ENCODE measurements at regions of chr20 and their contacts with region 1.

Region 1: DNA sequence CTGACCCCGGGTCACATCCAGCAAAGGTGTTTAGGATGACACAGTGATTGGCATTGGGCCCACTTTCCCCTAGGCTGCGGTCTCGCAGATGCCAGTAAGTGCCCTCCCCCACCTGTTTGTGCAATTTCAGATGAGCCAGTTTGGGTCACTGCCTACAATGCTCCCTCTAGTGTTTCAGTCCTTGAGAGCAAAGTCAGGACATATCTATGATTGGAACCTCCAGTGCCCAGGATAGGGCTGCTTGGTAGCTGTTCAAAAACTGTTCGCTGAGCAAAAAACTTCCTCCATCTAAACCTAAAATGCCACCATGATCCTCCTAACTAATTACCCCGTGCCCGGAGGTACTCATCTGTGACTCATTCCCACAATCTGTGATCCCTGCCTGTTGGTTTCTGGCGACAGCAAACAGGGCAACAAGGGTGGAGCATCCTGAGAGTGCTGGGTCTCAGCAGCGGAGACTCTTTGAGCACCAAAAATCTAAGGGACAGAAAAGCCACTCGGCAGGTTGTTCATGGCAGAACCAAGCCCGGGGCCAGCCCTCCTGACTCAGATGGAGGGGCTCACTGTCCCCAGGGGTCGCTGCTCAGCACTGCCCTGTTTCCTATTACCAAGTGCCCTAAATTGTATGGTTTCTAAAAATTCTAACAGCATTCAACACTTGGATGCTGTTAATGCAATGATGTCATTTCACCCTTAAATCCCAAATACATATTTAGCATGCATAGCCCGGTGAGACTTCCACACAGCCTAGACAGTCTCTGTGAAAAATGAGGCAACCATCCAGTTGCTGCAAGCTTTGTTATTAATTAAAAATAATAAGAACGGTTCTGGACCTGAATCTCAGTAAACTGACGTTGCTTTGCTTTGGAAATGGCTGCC is 5.0 kb downstream of the VSX1 start:
- DNase-seq: peak in 1 of 2 donors; percentile 57
- ATAC-seq: peak; percentile 75 to 84 (median 82)
- H3K4me3 ChIP-seq: peak overlapping the region; percentile 47
- H3K27ac ChIP-seq: peak overlapping the region; percentile 32
- H3K4me1 ChIP-seq: peaks cover 15% of the 10 kb centered on the region
- H3K27me3 ChIP-seq: peaks cover 0 to 30% (median 12%) of the 10 kb centered on the region in 3 donors
- CTCF ChIP-seq: peak; percentile 21

Region 2: GRCh38 chr20:24452498-24453127 is 624.4 kb before region 1 on chr20:
- intact Hi-C with region 1: no loop called
- DNase-seq: no peak
- ATAC-seq: no peak
- H3K4me3 ChIP-seq: no peak overlapping the region
- H3K27ac ChIP-seq: no peak overlapping the region
- H3K4me1 ChIP-seq: no peaks in the 10 kb centered on the region
- H3K27me3 ChIP-seq: peaks cover 0 to 6% (median 0%) of the 10 kb centered on the region in 3 donors
- CTCF ChIP-seq: no peak

Region 3: DNA sequence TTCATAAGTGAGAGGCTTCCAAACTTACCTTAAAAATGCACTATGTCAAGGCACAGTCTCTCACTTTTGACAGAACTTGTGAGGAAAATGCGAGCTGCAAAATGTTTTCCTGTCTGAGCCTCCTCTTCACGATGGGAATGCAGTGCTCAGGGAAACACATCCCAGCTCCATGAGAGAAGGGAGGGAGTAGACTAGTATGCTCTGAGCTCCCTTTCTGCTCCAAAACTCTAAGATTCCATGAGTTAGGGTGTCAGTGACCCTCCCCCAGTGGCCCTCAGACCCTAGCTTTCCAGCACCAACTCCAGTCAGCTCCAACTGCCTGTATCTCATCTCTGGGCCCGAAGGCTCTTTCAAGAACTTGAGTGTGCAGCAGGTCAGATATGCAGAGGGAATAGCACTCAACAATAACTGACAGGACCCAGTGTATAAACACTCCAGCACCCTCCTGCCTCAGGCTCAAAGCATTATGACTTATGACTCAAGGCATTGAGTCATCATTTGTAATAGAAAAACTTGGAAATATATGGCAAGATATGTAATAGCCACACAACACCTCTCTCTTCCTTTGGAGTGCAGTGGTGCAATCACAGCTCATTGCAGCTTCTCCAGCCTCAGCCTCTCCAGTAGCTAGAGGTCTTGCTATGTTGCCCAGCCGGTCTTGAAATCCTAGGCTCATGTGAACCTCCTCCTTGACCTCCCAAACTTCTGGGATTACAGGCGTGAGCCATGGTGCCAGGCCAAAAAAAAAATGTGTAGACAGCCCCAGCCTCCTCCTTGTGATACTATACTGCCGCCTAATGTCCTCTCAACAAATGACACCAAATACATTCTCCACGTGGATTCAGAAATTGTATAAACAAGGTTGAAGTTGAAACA is 101.8 kb after region 1 on chr20:
- intact Hi-C with region 1: loop called (anchors 5 kb)
- DNase-seq: peak in 1 of 2 donors; percentile 55
- ATAC-seq: peak; percentile 86 to 96 (median 91)
- H3K4me3 ChIP-seq: no peak overlapping the region
- H3K27ac ChIP-seq: peak overlapping the region; percentile 25
- H3K4me1 ChIP-seq: peaks cover 5% of the 10 kb centered on the region
- H3K27me3 ChIP-seq: peaks cover 0 to under 1% (median 0%) of the 10 kb centered on the region in 3 donors
- CTCF ChIP-seq: peak; percentile 74

Region 4: DNA sequence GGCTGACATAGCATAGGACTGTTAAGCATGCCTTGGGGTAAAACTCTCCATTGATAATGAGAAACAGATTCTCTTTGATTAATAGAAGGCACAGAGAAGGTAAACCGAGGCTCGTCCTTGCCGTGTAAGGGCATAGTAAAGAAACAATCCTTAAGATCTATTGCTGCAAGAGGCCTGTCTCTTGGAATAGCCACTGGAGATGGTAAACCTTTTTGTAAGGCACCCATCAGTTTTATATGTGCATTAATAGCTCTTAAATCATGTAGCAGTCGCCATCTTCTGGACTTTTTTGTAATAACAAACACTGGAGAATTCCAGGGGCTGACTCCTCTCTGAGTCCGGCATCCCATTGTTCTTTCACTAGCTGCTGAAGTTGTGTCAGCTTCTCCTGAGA is 322.1 kb after region 1 on chr20:
- intact Hi-C with region 1: loop called (anchors 5 to 10 kb)
- DNase-seq: no peak
- ATAC-seq: peak; percentile 64 to 92 (median 84)
- H3K4me3 ChIP-seq: no peak overlapping the region
- H3K27ac ChIP-seq: no peak overlapping the region
- H3K4me1 ChIP-seq: no peaks in the 10 kb centered on the region
- H3K27me3 ChIP-seq: no peaks in the 10 kb centered on the region
- CTCF ChIP-seq: peak; percentile 61

Region 5: GRCh38 chr20:25407311-25408169 is 330.6 kb after region 1 on chr20 and contains the start of gene GINS1:
- intact Hi-C with region 1: loop called in 1 of 2 experiments (anchors 10 kb)
- DNase-seq: peak; percentile 71 to 84
- ATAC-seq: peak; percentile 85 to 99 (median 92)
- H3K4me3 ChIP-seq: peak within 1 kb of the TSS; percentile 81
- H3K27ac ChIP-seq: no peak within 1 kb of the TSS
- H3K4me1 ChIP-seq: peaks cover 8% of the 10 kb centered on the region
- H3K27me3 ChIP-seq: no peaks in the 10 kb centered on the region
- CTCF ChIP-seq: no peak
- total RNA-seq, gene GINS1: 0.11 to 0.20 (median 0.15) TPM in 3 of 4 donors, not detected in the other